ENCODE measurements at regions of chr5 and their contacts with region 1.

Region 1: GRCh38 chr5:96807075-96807654 is 580 bp downstream of the ERAP1 start:
- DNase-seq: no peak
- H3K4me3 Mint-ChIP-seq: peak overlapping the region; percentile 93
- H3K27ac Mint-ChIP-seq: peak overlapping the region; percentile 92
- H3K4me1 Mint-ChIP-seq: peaks cover 62% of the 10 kb centered on the region
- H3K27me3 Mint-ChIP-seq: no peaks in the 10 kb centered on the region

Region 2: DNA sequence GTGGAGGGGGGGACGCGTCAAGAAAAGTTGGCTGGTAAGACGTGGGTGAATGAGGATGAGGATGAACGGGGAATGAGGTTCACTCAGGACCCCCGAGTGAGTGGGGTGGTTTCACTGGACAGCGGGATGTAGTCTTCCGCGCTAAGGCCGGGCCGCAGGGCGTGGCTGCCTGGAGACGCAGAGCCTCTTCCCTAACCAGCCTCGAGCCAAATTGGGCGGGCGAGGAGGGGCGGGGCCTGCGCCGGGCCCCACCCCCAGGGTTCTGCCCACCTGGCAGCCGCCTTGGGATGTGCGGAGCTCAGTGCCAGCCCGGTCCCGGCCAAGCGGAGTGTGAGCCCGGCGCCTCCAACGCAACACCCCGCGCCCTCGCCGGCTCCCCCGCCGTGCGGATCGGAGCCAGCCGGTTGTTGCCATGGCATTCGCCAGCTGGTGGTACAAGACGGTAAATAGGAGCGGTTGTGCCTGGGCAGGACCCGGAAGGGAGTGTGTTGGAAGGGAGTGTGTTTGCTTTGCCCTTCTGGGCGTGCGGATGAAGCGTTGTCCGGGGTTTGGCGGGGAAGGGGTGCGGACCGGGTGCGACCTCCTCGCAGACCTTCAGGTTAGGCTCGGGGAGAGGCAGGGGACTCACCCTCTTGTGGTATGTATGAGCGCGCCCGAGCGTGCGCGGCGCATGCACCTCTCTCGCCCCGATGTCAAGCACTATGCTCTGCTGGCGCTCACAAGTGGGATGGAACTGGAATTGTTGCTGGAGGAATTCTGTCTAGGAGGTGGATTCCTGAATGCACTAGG is 144.2 kb before region 1 on chr5:
- intact Hi-C with region 1: loop called (anchors 5 kb)
- DNase-seq: peak; percentile 82
- H3K4me3 Mint-ChIP-seq: peak overlapping the region; percentile 90
- H3K27ac Mint-ChIP-seq: peak overlapping the region; percentile 96
- H3K4me1 Mint-ChIP-seq: peaks cover 55% of the 10 kb centered on the region
- H3K27me3 Mint-ChIP-seq: peaks cover 26% of the 10 kb centered on the region

Region 3: DNA sequence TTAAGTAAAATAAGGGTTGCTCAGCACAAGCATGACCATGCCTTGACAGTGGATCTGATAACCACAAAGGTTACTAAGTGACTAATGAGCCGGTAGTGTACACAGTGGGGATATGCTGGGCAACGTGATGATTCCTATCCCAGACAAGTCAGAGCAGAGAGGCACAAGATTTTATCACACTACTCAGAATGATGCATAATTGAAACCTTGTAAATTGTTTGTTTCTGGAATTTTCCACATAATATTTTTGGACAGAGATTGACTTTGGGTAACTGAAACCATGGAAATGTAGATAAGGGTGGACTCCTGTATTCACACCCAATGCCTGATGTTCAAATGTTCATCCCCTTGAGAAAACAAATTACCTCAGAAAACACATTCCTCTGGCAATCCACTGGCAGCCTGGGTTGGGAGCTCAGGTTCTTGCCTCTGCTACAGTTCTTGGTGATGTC is 16.8 kb after region 1 on chr5:
- intact Hi-C with region 1: loop called (anchors 2 kb)
- DNase-seq: no peak
- H3K4me3 Mint-ChIP-seq: no peak overlapping the region
- H3K27ac Mint-ChIP-seq: no peak overlapping the region
- H3K4me1 Mint-ChIP-seq: peaks cover 26% of the 10 kb centered on the region
- H3K27me3 Mint-ChIP-seq: peaks cover 12% of the 10 kb centered on the region

Region 4: DNA sequence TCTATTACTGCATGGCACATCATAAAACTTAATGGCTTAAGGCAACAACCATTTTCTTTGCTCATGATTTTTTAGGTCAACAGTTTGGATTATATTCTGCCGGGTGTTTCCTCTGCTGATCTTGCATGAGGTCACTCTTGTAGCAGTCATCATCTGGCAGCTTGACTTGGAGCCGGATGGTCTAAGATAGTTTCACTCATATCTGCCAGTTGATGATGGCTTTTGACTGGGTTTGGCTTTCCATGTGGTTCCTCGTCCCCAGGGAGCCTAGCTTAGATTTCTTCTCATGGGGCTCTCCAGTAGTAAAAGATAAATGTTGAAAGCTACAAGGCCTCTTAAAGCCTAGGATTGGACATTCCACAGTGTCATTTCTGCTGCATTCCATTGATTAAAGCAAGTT is 156.1 kb after region 1 on chr5:
- intact Hi-C with region 1: loop called (anchors 5 kb)
- DNase-seq: no peak
- H3K4me3 Mint-ChIP-seq: peak overlapping the region; percentile 76
- H3K27ac Mint-ChIP-seq: peak overlapping the region; percentile 95
- H3K4me1 Mint-ChIP-seq: peaks cover 62% of the 10 kb centered on the region
- H3K27me3 Mint-ChIP-seq: no peaks in the 10 kb centered on the region

Region 5: GRCh38 chr5:97183100-97183929 is 376.1 kb after region 1 on chr5 and contains the start of gene RIOK2:
- intact Hi-C with region 1: loop called (anchors 2 kb)
- DNase-seq: peak; percentile 89
- H3K4me3 Mint-ChIP-seq: peak within 1 kb of the TSS; percentile 89
- H3K27ac Mint-ChIP-seq: peak within 1 kb of the TSS; percentile 100
- H3K4me1 Mint-ChIP-seq: peaks cover 24% of the 10 kb centered on the region
- H3K27me3 Mint-ChIP-seq: peaks cover 9% of the 10 kb centered on the region
- total RNA-seq, gene RIOK2: 28.1 and 30.5 TPM in 2 replicates